H1 (cell line): ENCODE measurements at regions of chr20 and their contacts with region 1.

Region 1: DNA sequence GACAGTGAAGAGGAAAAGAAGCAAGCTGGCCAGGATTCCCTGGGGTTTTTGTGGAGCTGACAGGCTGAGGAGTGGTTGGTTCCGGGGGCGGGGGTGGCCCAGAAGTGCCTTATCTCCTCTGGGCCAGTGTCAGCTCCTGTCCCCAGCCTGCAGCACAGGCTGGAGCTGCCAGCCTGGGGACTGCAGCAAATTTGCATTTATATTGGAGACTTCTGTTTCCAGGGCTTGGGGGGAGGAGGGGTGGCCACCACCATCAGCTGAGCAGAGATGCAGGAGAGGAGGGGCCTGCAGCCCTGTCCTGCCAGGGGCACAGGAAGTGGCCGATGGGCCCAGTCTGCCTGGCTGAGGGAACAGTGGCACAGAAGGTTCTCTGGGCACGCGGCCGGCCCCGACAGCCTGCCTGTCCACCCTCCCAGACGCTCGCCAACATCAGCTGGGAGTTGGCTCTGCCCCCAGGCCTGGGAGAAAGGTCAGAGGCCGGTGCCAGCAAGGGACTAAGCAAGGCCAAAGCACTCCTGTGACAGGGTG is 24.3 kb upstream of the SCRT2 start:
- DNase-seq: no peak
- H3K4me3 ChIP-seq: no peak overlapping the region
- H3K27ac ChIP-seq: no peak overlapping the region
- H3K4me1 ChIP-seq: peaks cover 7 to 15% (median 10%) of the 10 kb centered on the region in 4 experiments
- H3K27me3 ChIP-seq: no peaks in the 10 kb centered on the region
- CTCF ChIP-seq: no peak
- EP300 ChIP-seq: no peak
- POLR2A ChIP-seq: no peak
- RAD21 ChIP-seq: no peak

Region 2: GRCh38 chr20:675453-676314 is 24.2 kb before region 1 on chr20 and contains the start of gene SCRT2:
- CTCF ChIA-PET with region 1: interaction called, 14 read pairs
- POLR2A ChIA-PET with region 1: interaction called, 4 read pairs
- DNase-seq: peak in 1 of 2 experiments; percentile 91
- H3K4me3 ChIP-seq: peak within 1 kb of the TSS; percentile 48 to 92 (median 58)
- H3K27ac ChIP-seq: no peak within 1 kb of the TSS
- H3K4me1 ChIP-seq: peaks cover 0 to 13% (median 7%) of the 10 kb centered on the region in 4 experiments; a peak in 5 of 7 replicates
- H3K27me3 ChIP-seq: peaks cover 3 to 38% (median 32%) of the 10 kb centered on the region in 4 experiments
- CTCF ChIP-seq: no peak; a peak in 1 of 4 replicates
- EP300 ChIP-seq: no peak
- POLR2A ChIP-seq: no peak
- RAD21 ChIP-seq: no peak
- total RNA-seq, gene SCRT2: 0.27 and 0.34 TPM in 2 replicates

Region 3: DNA sequence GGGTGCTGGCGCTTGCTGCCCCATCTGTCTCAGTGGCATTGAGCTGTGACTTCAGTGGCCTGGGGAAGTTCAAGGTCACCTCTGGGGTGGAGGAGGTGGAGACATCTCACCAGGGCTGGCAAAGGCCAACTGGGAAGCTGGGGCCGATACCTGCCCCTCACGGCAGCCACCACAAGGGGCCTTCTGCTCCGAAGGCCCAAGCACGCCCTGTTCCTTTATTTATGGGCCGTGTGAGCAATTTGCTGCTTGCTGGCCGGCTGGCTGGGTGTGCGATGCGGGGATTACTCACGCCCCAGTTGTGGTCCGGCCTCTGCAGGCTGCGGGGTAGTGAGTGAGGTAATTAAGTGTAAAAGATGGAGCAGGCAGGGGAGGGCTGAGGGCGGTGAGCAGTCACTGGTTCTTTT is 11.1 kb before region 1 on chr20:
- CTCF ChIA-PET with region 1: interaction called, 16 read pairs
- POLR2A ChIA-PET with region 1: interaction called, 8 read pairs
- DNase-seq: no peak
- H3K4me3 ChIP-seq: no peak overlapping the region
- H3K27ac ChIP-seq: no peak overlapping the region
- H3K4me1 ChIP-seq: peaks cover 0 to 12% (median 7%) of the 10 kb centered on the region in 4 experiments; a peak in 4 of 7 replicates
- H3K27me3 ChIP-seq: no peaks in the 10 kb centered on the region
- CTCF ChIP-seq: peak; percentile 14 to 46 (median 44); a peak in 3 of 4 replicates
- EP300 ChIP-seq: no peak
- POLR2A ChIP-seq: no peak
- RAD21 ChIP-seq: peak; percentile 17 to 45; a peak in 2 of 4 replicates

Region 4: GRCh38 chr20:728248-728944 is 28.5 kb after region 1 on chr20:
- CTCF ChIA-PET with region 1: interaction called, 15 read pairs
- POLR2A ChIA-PET with region 1: no interaction called
- DNase-seq: peak; percentile 62 to 91
- H3K4me3 ChIP-seq: peak overlapping the region; percentile 34 to 68 (median 42)
- H3K27ac ChIP-seq: no peak overlapping the region
- H3K4me1 ChIP-seq: peaks cover 0 to 4% (median 2%) of the 10 kb centered on the region in 4 experiments; a peak in 4 of 7 replicates
- H3K27me3 ChIP-seq: peaks cover 0 to 12% (median 9%) of the 10 kb centered on the region in 4 experiments; a peak in 6 of 7 replicates
- CTCF ChIP-seq: peak; percentile 71 to 88 (median 78)
- EP300 ChIP-seq: no peak
- POLR2A ChIP-seq: no peak
- RAD21 ChIP-seq: peak; percentile 78 to 87